IMR-90 (cell line): ENCODE measurements at regions of chr12 and their contacts with region 1.

Region 1: GRCh38 chr12:124906606-124907261 is 7.7 kb downstream of the UBC start:
- DNase-seq: peak; percentile 90
- ATAC-seq: peak; percentile 56
- H3K4me3 ChIP-seq: no peak overlapping the region
- H3K27ac ChIP-seq: no peak overlapping the region
- H3K4me1 ChIP-seq: peaks cover 12% of the 10 kb centered on the region
- H3K27me3 ChIP-seq: no peaks in the 10 kb centered on the region
- CTCF ChIP-seq: peak; percentile 100
- POLR2A ChIP-seq: no peak
- RAD21 ChIP-seq: peak; percentile 92

Region 2: DNA sequence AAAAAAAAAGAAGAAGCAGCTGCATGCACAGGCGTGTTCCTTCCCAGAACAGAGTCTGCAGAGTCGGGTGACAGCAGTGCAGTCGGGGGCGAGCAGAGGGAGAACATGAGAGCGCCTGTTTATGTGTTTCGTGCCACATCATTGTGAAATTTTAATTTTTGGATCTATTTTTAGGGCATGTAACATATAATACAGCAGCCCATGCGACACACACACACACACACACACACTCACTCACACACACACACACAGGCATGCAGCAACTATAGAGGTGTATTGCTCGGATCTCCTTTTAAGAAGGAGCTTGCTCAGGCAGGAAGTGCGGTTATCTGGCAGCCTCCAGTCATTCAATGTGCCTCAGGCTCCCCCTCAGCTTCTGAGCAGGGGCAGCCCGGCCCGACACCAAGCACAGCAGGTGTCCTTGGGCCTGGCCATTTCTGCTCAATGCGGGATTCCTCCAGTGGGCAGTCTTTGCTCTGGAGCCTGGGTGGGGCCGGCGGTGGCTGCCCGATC is 861.9 kb before region 1 on chr12:
- CTCF ChIA-PET with region 1: no interaction called
- POLR2A ChIA-PET with region 1: no interaction called
- dilution Hi-C with region 1: no loop called
- in situ Hi-C with region 1: loop called (anchors 5 kb)
- intact Hi-C with region 1: no loop called
- DNase-seq: no peak
- ATAC-seq: no peak
- H3K4me3 ChIP-seq: no peak overlapping the region
- H3K27ac ChIP-seq: no peak overlapping the region
- H3K4me1 ChIP-seq: no peaks in the 10 kb centered on the region
- H3K27me3 ChIP-seq: peaks cover 3% of the 10 kb centered on the region; the same call in 1 of the 2 replicates
- CTCF ChIP-seq: no peak
- POLR2A ChIP-seq: no peak
- RAD21 ChIP-seq: no peak

Region 3: GRCh38 chr12:124694846-124695497 is 211.8 kb before region 1 on chr12:
- CTCF ChIA-PET with region 1: no interaction called
- POLR2A ChIA-PET with region 1: no interaction called
- dilution Hi-C with region 1: no loop called
- in situ Hi-C with region 1: no loop called
- intact Hi-C with region 1: no loop called
- DNase-seq: peak; percentile 91
- ATAC-seq: peak; percentile 80
- H3K4me3 ChIP-seq: no peak overlapping the region
- H3K27ac ChIP-seq: no peak overlapping the region
- H3K4me1 ChIP-seq: no peaks in the 10 kb centered on the region; the same call in 1 of the 2 replicates
- H3K27me3 ChIP-seq: no peaks in the 10 kb centered on the region
- CTCF ChIP-seq: no peak
- POLR2A ChIP-seq: no peak
- RAD21 ChIP-seq: no peak

Region 4: GRCh38 chr12:124774462-124775167 is 132.1 kb before region 1 on chr12:
- CTCF ChIA-PET with region 1: interaction called, 4 read pairs
- POLR2A ChIA-PET with region 1: interaction called, 3 read pairs
- dilution Hi-C with region 1: no loop called
- in situ Hi-C with region 1: no loop called
- intact Hi-C with region 1: loop called (anchors 2 kb)
- DNase-seq: peak; percentile 85
- ATAC-seq: peak; percentile 37
- H3K4me3 ChIP-seq: peak overlapping the region; percentile 28; the same call in 1 of the 2 replicates
- H3K27ac ChIP-seq: peak overlapping the region; percentile 23; the same call in 1 of the 2 replicates
- H3K4me1 ChIP-seq: peaks cover 15% of the 10 kb centered on the region
- H3K27me3 ChIP-seq: no peaks in the 10 kb centered on the region
- CTCF ChIP-seq: no peak
- POLR2A ChIP-seq: no peak
- RAD21 ChIP-seq: no peak

Region 5: GRCh38 chr12:124884587-124885438 is 21.9 kb before region 1 on chr12:
- CTCF ChIA-PET with region 1: no interaction called
- POLR2A ChIA-PET with region 1: no interaction called
- dilution Hi-C with region 1: no loop called
- in situ Hi-C with region 1: no loop called
- intact Hi-C with region 1: no loop called
- DNase-seq: no peak
- ATAC-seq: no peak
- H3K4me3 ChIP-seq: no peak overlapping the region
- H3K27ac ChIP-seq: no peak overlapping the region
- H3K4me1 ChIP-seq: peaks cover 2% of the 10 kb centered on the region; the same call in 1 of the 2 replicates
- H3K27me3 ChIP-seq: no peaks in the 10 kb centered on the region; the same call in 1 of the 2 replicates
- CTCF ChIP-seq: no peak
- POLR2A ChIP-seq: no peak
- RAD21 ChIP-seq: no peak

Region 6: GRCh38 chr12:124917135-124917840 is 10.6 kb after region 1 on chr12:
- CTCF ChIA-PET with region 1: interaction called, 10 read pairs
- POLR2A ChIA-PET with region 1: interaction called, 10 read pairs
- dilution Hi-C with region 1: no loop called
- in situ Hi-C with region 1: no loop called
- intact Hi-C with region 1: no loop called
- DNase-seq: peak; percentile 100
- ATAC-seq: peak; percentile 72
- H3K4me3 ChIP-seq: peak overlapping the region; percentile 40; the same call in 1 of the 2 replicates
- H3K27ac ChIP-seq: peak overlapping the region; percentile 88
- H3K4me1 ChIP-seq: peaks cover 11% of the 10 kb centered on the region
- H3K27me3 ChIP-seq: no peaks in the 10 kb centered on the region
- CTCF ChIP-seq: no peak
- POLR2A ChIP-seq: peak; percentile 57; the same call in 1 of the 2 replicates
- RAD21 ChIP-seq: no peak

Region 7: DNA sequence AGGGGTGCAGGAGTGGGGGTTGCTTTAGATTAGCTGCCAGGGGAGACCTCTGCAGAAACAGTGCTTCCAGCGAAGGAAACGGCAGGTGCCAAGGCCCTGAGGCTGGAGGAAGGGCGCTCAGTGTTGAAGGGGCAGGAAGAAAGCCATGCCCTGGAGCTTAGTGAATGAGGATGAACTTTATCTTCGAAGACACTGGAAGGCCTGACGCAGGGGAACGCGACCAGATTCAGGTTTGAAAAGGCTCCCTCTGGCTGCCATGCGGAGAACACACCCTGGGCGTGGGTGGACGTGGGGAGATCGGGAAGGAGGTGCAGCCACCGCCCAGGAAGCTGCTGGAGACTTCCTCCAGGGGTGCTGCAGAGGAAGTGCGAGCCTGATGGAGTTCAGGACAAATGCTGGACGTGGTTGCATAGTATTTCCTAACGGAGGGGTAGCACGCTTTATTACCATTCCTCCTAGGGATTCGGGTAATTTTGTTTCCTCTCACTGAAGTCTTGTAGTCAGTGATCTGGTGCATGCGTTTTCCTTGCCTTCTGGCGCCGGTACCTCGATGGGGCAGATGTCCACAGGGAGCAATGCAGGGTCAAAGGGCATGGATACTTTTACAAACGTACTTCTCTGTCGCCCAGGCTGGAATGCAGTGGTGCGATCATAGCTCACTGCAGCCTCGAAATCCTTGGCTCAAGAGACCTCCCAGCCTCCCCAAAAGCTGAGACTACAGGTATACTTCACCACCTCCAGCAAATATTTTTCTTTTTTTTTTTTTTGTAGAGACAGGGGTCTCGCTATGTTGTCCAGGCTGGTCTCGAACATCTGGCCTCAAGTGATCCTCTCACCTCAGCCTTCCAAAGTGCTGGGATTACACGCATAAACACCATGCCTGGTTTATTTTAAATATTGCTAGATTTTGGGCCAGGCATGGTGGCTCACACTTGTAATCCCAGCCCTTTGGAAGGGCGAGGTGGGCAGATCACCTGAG is 34.1 kb after region 1 on chr12:
- CTCF ChIA-PET with region 1: interaction called, 32 read pairs
- POLR2A ChIA-PET with region 1: interaction called, 7 read pairs
- dilution Hi-C with region 1: no loop called
- in situ Hi-C with region 1: no loop called
- intact Hi-C with region 1: loop called (anchors 1 kb)
- DNase-seq: peak; percentile 87
- ATAC-seq: peak; percentile 43
- H3K4me3 ChIP-seq: peak overlapping the region; percentile 9; the same call in 1 of the 2 replicates
- H3K27ac ChIP-seq: peak overlapping the region; percentile 46
- H3K4me1 ChIP-seq: peaks cover 2% of the 10 kb centered on the region; the same call in 1 of the 2 replicates
- H3K27me3 ChIP-seq: no peaks in the 10 kb centered on the region
- CTCF ChIP-seq: peak; percentile 86
- POLR2A ChIP-seq: no peak
- RAD21 ChIP-seq: peak; percentile 66